Prostate gland (tissue), 2 donors: ENCODE measurements at regions of chr17 and their contacts with region 1.

Region 1: GRCh38 chr17:65055348-65056261 is 935 bp downstream of the GNA13 start:
- DNase-seq: peak; percentile 63
- H3K4me3 ChIP-seq: peak overlapping the region; percentile 79 to 91
- H3K27ac ChIP-seq: peak overlapping the region; percentile 99 to 100
- H3K4me1 ChIP-seq: no peaks in the 10 kb centered on the region
- H3K27me3 ChIP-seq: no peaks in the 10 kb centered on the region
- CTCF ChIP-seq: no peak
- POLR2A ChIP-seq: peak; percentile 47

Region 2: GRCh38 chr17:64975329-64976087 is 80.1 kb before region 1 on chr17:
- intact Hi-C with region 1: loop called (anchors 5 kb)
- DNase-seq: peak; percentile 92
- H3K4me3 ChIP-seq: peak overlapping the region; percentile 81 to 89
- H3K27ac ChIP-seq: peak overlapping the region; percentile 98 to 99
- H3K4me1 ChIP-seq: no peaks in the 10 kb centered on the region
- H3K27me3 ChIP-seq: no peaks in the 10 kb centered on the region
- CTCF ChIP-seq: peak in 1 of 4 experiments; percentile 18
- POLR2A ChIP-seq: peak; percentile 96

Region 3: GRCh38 chr17:65020313-65020712 is 35.3 kb before region 1 on chr17:
- intact Hi-C with region 1: loop called (anchors 2 kb)
- DNase-seq: no peak
- H3K4me3 ChIP-seq: no peak overlapping the region
- H3K27ac ChIP-seq: no peak overlapping the region
- H3K4me1 ChIP-seq: peaks cover 6% of the 10 kb centered on the region
- H3K27me3 ChIP-seq: no peaks in the 10 kb centered on the region
- CTCF ChIP-seq: no peak
- POLR2A ChIP-seq: no peak

Region 4: GRCh38 chr17:65100316-65101140 is 44.9 kb after region 1 on chr17:
- intact Hi-C with region 1: loop called (anchors 2 kb)
- DNase-seq: peak; percentile 85
- H3K4me3 ChIP-seq: peak overlapping the region; percentile 44 to 46
- H3K27ac ChIP-seq: peak overlapping the region; percentile 56 to 70
- H3K4me1 ChIP-seq: no peaks in the 10 kb centered on the region
- H3K27me3 ChIP-seq: no peaks in the 10 kb centered on the region
- CTCF ChIP-seq: peak; percentile 90 to 96 (median 94)
- POLR2A ChIP-seq: peak; percentile 15